Activated naive CD4-positive, alpha-beta T cell treated with anti-CD3 and anti-CD28 coated beads, Interleukin-2, amount 10 ng/mL, durations not matched to agents 7 days and 5 days (primary cell): ENCODE measurements at regions of chr17 and their contacts with region 1.

Region 1: DNA sequence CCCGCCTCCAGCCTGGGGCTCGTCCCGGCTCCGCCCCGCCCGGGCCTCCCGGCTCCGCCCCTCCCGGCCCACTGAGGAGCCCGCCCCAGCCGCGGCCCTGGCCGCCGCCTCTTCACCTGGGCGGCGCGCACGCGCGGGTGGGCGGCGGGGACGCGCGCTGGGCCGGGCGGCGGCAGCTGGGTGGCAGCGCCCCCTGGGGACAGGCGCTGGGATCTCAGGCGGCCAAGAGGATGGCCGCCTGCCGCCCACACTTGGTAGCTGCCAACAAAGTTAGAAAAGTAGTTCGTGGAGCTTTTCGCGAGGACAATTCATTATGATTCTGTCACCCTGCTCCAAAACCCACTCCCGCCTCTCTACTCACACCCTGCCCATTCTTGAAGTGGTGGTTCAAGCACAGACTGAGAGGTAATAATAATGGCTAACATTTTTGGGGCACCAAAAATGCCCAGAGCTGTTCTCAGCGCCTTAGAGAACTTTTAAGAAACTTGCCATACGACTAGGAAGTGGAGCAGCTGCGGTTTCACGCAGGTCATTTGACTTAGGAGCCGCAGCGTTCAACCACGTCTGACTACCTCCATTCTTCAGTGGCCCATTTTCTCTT is 340 bp upstream of the MYO1D start:
- DNase-seq: peak; percentile 92
- H3K4me3 Mint-ChIP-seq: peak overlapping the region; percentile 64
- H3K27ac Mint-ChIP-seq: peak overlapping the region; percentile 46
- H3K4me1 Mint-ChIP-seq: peaks cover 13% of the 10 kb centered on the region
- H3K27me3 Mint-ChIP-seq: peaks cover 33% of the 10 kb centered on the region

Region 2: GRCh38 chr17:32723310-32723955 is 153.8 kb before region 1 on chr17:
- CTCF ChIA-PET with region 1: no interaction called
- DNase-seq: no peak
- H3K4me3 Mint-ChIP-seq: no peak overlapping the region
- H3K27ac Mint-ChIP-seq: no peak overlapping the region
- H3K4me1 Mint-ChIP-seq: no peaks in the 10 kb centered on the region
- H3K27me3 Mint-ChIP-seq: no peaks in the 10 kb centered on the region

Region 3: GRCh38 chr17:32801193-32801592 is 76.1 kb before region 1 on chr17:
- CTCF ChIA-PET with region 1: no interaction called
- DNase-seq: no peak
- H3K4me3 Mint-ChIP-seq: no peak overlapping the region
- H3K27ac Mint-ChIP-seq: no peak overlapping the region
- H3K4me1 Mint-ChIP-seq: no peaks in the 10 kb centered on the region
- H3K27me3 Mint-ChIP-seq: peaks cover 9% of the 10 kb centered on the region

Region 4: DNA sequence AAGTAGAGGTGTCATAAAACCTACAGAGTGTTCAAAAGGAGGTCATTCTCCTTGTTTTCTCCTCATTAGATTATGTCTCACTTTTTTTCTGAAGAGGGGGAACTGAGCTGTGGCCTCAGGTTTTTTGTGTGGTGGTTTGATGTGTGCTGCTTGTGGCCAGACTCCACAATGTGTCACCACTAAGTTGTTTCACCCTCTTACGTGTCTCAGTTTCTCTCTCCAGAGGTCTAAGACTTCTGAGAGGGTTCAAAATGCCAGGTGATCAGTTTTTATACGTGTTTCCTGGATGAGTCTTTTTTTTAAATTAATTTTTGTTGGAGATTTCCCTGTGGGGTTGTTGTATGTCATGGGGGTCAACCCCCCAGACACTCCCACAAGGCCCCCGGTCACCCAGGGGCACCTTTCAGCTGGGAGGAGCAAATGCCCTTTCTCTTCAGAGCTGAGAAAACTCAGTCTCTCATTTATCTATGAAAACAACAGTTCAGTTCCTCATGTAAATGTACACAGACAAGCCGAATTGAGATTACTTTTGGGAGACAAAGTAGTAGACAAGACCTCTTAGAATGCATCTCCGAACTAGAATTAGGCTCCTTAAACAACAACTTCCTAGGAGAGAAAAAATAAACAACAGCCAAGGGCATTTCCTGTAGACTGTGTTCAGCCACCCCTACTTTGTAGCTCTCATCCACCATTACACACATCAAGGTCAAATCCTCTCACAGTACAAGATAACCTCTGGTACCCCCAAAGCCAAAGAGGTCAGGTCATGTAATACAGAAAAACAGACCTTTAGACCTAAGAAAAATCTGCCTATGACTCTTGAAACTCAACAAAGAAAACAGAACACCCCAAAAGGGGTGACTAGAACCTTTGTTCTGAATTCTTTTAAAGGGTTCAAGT is 26.8 kb after region 1 on chr17:
- CTCF ChIA-PET with region 1: interaction called, 12 read pairs
- DNase-seq: no peak
- H3K4me3 Mint-ChIP-seq: no peak overlapping the region
- H3K27ac Mint-ChIP-seq: no peak overlapping the region
- H3K4me1 Mint-ChIP-seq: peaks cover 18% of the 10 kb centered on the region
- H3K27me3 Mint-ChIP-seq: peaks cover 30% of the 10 kb centered on the region

Region 5: GRCh38 chr17:32909787-32910369 is 32.6 kb after region 1 on chr17:
- CTCF ChIA-PET with region 1: interaction called, 19 read pairs
- DNase-seq: peak; percentile 67
- H3K4me3 Mint-ChIP-seq: no peak overlapping the region
- H3K27ac Mint-ChIP-seq: no peak overlapping the region
- H3K4me1 Mint-ChIP-seq: peaks cover 4% of the 10 kb centered on the region
- H3K27me3 Mint-ChIP-seq: peaks cover 19% of the 10 kb centered on the region

Region 6: DNA sequence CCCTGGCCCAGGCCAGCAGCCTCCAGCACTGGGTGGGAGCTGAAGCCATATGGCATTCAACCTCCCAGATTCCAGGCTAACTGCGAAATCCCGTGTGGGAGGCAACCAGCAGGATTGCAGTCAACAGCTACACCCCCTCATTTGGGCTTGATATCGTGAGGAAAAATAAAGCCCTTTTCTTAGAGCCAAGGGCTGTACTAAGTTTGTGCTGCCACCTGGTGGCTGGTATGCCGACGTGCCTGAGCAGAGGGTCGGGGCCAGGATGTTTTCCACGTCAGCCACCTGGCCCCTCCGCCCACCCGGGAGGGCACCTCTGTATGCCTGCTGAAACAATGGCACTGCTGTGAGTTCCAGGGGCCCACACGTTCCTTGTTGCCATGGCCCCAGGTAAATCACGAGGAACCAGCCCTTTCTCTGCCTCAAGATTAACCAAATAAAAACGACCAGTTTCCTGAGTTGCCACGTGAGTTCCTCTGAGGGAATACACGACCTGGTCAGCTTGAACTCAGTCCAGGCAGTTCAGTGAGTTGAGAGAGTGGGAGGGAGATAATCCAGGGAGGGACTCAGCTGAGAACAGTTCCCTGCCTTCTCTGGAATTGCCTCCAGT is 59.7 kb after region 1 on chr17:
- CTCF ChIA-PET with region 1: interaction called, 19 read pairs
- DNase-seq: peak; percentile 73
- H3K4me3 Mint-ChIP-seq: no peak overlapping the region
- H3K27ac Mint-ChIP-seq: no peak overlapping the region
- H3K4me1 Mint-ChIP-seq: peaks cover 2% of the 10 kb centered on the region
- H3K27me3 Mint-ChIP-seq: peaks cover 45% of the 10 kb centered on the region